ENCODE measurements at regions of chr9 and their contacts with region 1.

Region 1: DNA sequence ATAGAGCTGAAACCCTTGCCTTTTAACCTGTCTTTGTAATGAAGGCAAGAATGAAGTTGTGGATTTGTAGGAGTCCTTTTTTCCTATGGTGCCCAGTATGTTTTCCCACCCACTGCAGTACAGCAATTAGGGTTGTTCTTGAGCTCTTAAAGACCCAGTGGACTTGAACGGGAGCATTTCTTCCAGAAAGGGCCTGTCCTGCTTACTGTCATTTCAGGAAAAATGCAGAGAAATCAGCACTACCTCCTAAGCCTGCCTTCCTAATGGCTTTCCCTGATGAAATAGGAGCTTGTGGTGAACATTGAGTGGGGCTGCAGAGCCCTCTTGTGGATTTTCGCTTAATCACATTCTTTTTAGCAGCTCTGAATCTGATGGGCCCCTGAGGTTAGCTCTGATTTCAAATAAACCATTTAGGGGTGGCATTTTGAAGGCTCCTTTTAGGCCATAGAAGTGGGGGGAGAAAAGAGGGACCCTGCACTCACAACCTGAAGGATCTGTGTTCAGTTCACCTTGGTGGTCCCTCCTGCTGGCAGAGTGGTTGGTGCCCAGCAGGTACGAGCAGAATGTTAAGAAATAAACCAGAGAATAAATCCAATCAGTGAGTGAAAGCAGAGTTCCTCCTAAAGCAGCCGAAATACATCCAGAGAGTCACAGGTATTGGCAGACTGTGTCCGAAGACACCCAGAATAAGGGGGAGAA is 188.0 kb upstream of the KLF9 start:
- DNase-seq: peak in 6 of 10 donors; percentile 47 to 74 (median 60)
- H3K4me3 ChIP-seq: peak overlapping the region in 34 of 59 donors; percentile 1 to 56 (median 30)
- H3K27ac ChIP-seq: peak overlapping the region; percentile 44 to 93 (median 85)
- H3K27me3 ChIP-seq: no peaks in the 10 kb centered on the region
- CTCF ChIP-seq: peak; percentile 64 to 92 (median 83)

Region 2: DNA sequence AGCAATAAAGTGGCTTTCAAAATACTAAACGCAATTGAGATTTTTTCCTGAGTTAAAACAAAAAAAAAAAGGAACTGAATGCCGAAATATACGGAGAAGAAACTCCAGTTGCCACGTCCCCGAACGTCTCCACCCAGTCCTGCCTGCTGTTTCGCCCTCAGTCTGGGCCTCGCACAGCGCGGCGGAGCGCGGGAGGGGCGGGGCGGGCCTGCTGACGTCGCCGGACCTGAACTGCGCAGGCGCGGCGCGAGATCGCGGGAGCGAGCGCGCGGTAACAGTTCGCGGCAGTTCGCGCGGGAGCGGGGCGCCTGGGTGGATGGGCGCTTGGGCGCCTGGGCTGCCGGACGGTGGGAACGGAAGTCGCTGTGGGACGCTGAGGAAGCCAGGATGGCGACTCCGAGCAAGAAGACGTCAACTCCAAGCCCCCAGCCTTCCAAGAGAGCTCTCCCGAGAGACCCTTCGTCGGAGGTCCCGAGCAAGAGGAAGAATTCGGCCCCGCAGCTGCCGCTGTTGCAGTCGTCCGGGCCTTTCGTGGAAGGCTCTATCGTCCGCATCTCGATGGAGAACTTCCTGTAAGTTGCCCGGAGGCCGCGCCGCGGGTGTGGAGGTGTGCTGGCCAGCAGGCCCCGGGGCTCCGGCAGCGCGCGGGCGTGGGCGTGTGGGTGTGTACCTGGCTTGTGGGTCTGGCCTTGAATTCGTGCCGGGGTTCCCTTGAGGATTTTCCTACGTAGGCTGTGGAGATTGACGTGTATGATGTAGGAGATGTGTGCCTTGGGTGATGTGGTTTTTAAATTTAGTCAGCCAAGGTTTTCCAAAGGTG is 343.6 kb before region 1 on chr9 and contains the start of gene SMC5:
- intact Hi-C with region 1: loop called (anchors 10 kb)
- DNase-seq: peak; percentile 78 to 96 (median 87)
- H3K4me3 ChIP-seq: peak within 1 kb of the TSS; percentile 64 to 99 (median 92)
- H3K27ac ChIP-seq: peak within 1 kb of the TSS; percentile 63 to 97 (median 88)
- H3K27me3 ChIP-seq: no peaks in the 10 kb centered on the region
- CTCF ChIP-seq: peak in 21 of 56 donors; percentile 8 to 51 (median 28)
- total RNA-seq, gene SMC5: 12.0 to 37.3 (median 21.9) TPM

Region 3: DNA sequence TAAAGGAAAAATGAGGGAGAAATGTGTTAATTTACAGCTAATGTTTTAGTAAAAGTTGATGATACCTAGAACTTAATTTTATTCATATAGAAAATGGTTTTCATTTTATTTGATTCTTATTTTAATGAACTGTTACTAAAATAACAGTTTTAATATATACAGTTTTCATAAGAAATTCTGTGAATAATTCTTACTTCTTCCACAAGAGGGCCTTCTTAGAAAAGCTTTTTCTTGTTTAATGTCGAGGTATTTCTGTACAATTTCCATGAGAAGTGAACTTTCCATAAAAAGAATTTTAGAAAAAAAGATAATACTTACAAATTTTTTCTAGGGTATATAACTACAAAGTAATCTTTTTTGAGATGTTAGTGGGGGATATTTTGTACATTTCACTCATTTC is 261.9 kb before region 1 on chr9:
- intact Hi-C with region 1: loop called (anchors 2 to 5 kb)
- DNase-seq: no peak
- H3K4me3 ChIP-seq: no peak overlapping the region
- H3K27ac ChIP-seq: peak overlapping the region in 4 of 59 donors; percentile 2 to 42 (median 8)
- H3K27me3 ChIP-seq: no peaks in the 10 kb centered on the region
- CTCF ChIP-seq: peak; percentile 46 to 86 (median 72)

Region 4: DNA sequence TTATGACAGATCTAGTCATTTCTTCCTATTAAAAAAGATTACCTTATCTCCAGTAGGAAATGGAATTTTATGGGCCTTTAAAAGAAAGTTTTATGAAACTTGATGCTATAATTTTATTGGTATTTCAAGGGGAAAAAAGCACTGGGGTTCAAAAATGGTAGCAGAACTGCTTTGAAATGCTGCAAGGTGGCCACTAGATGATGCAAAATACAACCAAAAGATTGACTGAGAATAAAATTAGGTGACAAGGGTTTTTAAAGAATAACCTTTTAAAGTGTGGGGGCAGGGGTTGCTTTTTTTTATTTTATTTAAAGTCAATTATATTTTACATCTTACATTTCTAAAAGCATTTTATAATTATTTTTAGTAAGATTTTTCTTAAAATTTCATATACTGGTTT is 249.7 kb before region 1 on chr9:
- intact Hi-C with region 1: loop called in 1 of 2 experiments (anchors 5 kb)
- DNase-seq: no peak
- H3K4me3 ChIP-seq: no peak overlapping the region
- H3K27ac ChIP-seq: peak overlapping the region in 7 of 59 donors; percentile 0 to 29 (median 8)
- H3K27me3 ChIP-seq: no peaks in the 10 kb centered on the region
- CTCF ChIP-seq: peak in 55 of 56 donors; percentile 15 to 87 (median 63)

Region 5: DNA sequence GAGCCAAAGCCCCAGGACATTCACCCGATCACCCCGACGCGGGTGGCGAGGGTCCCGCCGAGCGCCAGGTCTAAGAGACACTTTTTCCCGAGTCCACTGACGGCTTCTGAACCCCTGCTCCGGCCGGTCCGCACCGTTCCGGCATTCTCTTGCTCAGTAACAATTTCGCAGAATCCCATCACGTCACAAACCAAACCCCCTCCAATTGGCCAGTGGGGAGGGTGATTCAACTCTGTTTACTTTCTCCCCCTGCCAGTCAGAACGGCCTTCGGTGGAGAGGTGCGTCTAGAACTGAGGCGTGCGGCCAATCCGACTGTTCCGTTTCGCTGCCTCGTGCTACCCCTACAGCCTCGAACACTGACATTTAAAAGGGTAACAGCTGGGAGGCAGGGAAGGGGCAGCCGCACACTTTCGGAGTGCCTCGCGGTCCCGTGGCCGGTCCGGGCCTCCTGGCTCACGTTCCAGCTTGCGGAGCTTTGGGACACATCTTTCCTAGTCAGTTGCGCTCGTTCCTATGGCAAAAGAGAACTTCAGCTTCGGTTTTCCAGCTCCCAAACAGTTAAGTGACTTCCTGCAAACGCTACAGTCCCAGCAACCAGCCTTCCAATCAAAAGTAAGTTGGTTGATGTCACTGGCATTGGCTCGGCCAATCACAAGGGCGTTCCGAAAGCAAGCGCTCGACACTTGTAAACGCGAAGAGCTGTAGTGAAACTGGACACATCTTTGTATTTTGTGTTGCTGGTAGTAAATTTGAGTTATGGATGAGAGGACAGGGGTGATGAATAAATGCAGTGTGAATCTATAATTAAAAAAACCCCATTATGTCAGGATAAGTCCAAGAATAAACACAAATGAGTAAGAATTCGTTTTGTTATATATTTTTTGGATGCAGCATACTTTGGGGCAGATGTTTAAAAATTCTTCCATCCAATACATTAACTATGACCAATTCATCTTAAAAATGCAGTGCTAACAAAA is 188.4 kb before region 1 on chr9 and contains the start of gene KLF9:
- intact Hi-C with region 1: loop called in 1 of 2 experiments (anchors 2 kb)
- DNase-seq: peak; percentile 82 to 97 (median 94)
- H3K4me3 ChIP-seq: peak within 1 kb of the TSS; percentile 63 to 99 (median 93)
- H3K27ac ChIP-seq: peak within 1 kb of the TSS; percentile 72 to 100 (median 99)
- H3K27me3 ChIP-seq: no peaks in the 10 kb centered on the region
- CTCF ChIP-seq: peak in 8 of 56 donors; percentile 4 to 16 (median 10)
- total RNA-seq, gene KLF9: 38.3 to 97.2 (median 59.3) TPM

Region 6: DNA sequence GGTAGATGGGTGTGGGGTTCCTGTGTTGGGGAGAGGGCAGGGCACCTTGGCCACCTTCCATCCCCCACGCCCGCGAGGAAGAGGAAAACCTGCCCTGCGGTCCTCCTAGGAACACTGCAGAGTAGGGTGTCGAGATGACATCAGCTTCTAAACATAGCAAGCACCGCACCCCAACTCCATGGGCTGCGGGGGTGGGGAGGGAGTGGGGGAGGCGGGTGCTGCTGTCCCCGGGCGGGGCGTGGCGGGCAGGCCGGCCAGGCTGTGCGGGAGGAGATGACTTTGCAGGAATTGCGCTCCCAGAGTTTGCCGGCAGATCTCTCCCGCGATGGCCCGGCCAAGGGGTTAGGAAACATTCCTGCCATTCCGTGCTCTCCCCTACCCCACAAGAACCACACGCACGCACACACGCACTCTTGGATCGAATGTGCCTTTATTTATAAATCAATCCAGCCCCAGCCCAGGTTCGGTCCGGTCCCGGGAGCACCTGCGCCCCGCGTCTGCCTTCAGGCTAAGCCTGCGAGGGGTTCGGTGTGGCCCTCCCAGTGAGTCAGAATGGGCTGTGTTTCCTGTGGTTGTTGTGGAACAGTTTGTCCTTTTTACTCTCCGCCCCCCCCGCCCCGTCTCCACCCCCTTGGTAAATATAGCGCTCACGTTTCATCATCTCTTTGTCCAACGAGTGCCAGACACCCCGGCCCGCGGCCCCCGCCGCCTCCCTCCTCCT is 182.8 kb before region 1 on chr9:
- intact Hi-C with region 1: loop called (anchors 2 kb)
- DNase-seq: peak; percentile 81 to 93 (median 92)
- H3K4me3 ChIP-seq: peak overlapping the region; percentile 37 to 83 (median 65)
- H3K27ac ChIP-seq: peak overlapping the region; percentile 96 to 100 (median 99)
- H3K27me3 ChIP-seq: no peaks in the 10 kb centered on the region
- CTCF ChIP-seq: peak in 21 of 56 donors; percentile 1 to 35 (median 16)

Region 7: GRCh38 chr9:70484210-70485130 is 118.0 kb before region 1 on chr9:
- intact Hi-C with region 1: loop called (anchors 1 to 5 kb)
- DNase-seq: peak in 2 of 10 donors; percentile 41 to 52
- H3K4me3 ChIP-seq: no peak overlapping the region
- H3K27ac ChIP-seq: peak overlapping the region in 46 of 59 donors; percentile 14 to 98 (median 58)
- H3K27me3 ChIP-seq: no peaks in the 10 kb centered on the region
- CTCF ChIP-seq: peak; percentile 59 to 91 (median 84)

Region 8: GRCh38 chr9:70679845-70680244 is 77.4 kb after region 1 on chr9:
- intact Hi-C with region 1: no loop called
- DNase-seq: no peak
- H3K4me3 ChIP-seq: no peak overlapping the region
- H3K27ac ChIP-seq: no peak overlapping the region
- H3K27me3 ChIP-seq: no peaks in the 10 kb centered on the region
- CTCF ChIP-seq: no peak

Measured in dorsolateral prefrontal cortex (tissue), 120 donors.